ENCODE measurements at regions of chr19 and their contacts with region 1.

Region 1: GRCh38 chr19:34120846-34121639 is 51.3 kb upstream of the LSM14A start:
- DNase-seq: peak; percentile 59
- H3K4me3 ChIP-seq: no peak overlapping the region
- H3K27ac ChIP-seq: no peak overlapping the region
- H3K4me1 ChIP-seq: no peaks in the 10 kb centered on the region
- CTCF ChIP-seq: peak; percentile 89

Region 2: DNA sequence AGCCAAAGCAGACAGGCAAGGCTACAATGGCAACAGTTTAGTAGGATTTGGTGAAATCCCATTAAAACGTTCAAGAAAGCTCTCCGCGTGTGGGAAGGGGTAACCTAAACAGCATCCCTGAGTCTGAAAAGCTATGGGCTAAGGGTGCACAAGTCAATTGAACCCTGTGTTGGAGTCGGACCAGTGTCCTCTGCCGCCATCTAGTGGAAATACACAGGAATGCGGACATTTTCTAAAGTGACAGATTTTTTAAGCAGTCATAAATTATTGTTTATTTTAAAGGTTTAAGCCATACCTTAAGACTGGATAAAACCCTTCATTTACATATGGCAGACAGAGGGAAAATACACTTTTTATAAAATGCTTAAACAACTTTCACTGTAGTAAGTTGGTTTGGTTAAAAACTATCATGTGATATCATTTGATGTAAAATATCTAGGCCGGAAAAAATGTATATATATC is 24.7 kb after region 1 on chr19:
- CTCF ChIA-PET with region 1: interaction called, 3 read pairs
- POLR2A ChIA-PET with region 1: no interaction called
- intact Hi-C with region 1: loop called (anchors 1 kb)
- DNase-seq: peak; percentile 71
- H3K4me3 ChIP-seq: no peak overlapping the region
- H3K27ac ChIP-seq: no peak overlapping the region
- H3K4me1 ChIP-seq: no peaks in the 10 kb centered on the region
- CTCF ChIP-seq: peak; percentile 95

Region 3: DNA sequence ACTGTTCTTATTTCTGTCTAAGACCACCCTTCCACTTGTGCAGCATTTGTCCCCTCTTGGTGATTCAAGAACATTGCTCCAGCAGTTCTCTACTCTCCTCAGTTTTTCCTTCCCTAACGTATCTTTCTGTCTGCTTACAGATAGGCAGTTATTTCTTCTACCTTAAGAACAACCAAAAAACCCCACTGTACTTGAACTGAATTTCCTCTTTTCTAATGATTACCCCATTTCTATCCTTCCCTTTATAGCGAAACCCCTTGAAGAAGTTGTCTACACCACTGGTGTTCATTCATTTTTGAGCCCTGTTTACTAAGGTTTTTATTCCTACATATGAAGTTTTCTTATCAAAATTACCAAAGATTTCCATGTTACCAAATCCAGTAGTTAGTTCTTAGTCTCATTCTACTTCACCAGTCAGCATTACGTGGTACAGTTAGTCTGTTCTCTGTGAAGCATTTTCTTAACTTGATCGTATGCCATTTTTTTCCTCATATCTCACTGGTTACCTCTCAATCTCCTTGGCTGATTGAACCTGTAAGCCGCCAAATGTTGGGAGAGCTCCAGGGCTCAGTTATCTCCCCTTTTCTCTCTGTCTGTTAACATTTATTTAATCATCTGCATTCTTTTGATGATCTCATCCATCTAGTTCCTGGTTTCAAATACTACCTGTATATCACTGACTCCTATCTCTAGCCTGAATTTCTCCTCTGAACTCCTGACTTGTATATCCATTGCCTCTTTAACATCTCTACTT is 60.2 kb after region 1 on chr19:
- CTCF ChIA-PET with region 1: no interaction called
- POLR2A ChIA-PET with region 1: no interaction called
- intact Hi-C with region 1: no loop called
- DNase-seq: no peak
- H3K4me3 ChIP-seq: no peak overlapping the region
- H3K27ac ChIP-seq: no peak overlapping the region
- H3K4me1 ChIP-seq: peaks cover 61% of the 10 kb centered on the region
- CTCF ChIP-seq: no peak

Region 4: DNA sequence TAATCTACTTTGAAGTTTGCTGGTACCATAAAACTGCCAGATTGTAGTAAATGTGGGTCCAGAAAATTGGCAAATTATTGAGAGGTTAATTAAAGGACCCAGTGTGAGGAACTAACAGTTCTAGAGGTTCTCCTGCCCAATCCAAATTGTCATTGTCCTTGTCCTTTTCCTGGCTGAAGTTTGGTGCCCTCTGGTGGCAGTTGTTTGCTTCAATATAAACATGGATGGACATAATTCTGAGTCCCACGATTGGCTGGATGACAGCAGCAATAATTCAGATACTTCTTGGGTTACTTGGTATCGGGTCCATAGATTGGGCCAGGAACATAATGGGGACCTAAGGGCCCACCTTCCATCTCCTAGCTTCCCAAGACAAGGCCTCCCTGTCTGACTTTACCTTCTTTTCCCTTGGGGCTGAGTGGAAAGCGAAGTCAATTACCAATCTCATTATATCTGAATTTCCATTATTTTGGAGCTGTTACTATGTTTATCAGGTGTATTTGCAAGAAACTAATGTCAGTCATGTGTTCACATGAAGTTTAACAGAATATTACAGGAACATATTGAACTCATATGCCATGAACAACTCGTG is 99.5 kb after region 1 on chr19:
- CTCF ChIA-PET with region 1: no interaction called
- POLR2A ChIA-PET with region 1: no interaction called
- intact Hi-C with region 1: loop called (anchors 10 kb)
- DNase-seq: peak; percentile 73
- H3K4me3 ChIP-seq: no peak overlapping the region
- H3K27ac ChIP-seq: no peak overlapping the region
- H3K4me1 ChIP-seq: no peaks in the 10 kb centered on the region
- CTCF ChIP-seq: peak; percentile 97

Region 5: GRCh38 chr19:34276614-34277013 is 155.6 kb after region 1 on chr19:
- CTCF ChIA-PET with region 1: no interaction called
- POLR2A ChIA-PET with region 1: no interaction called
- intact Hi-C with region 1: no loop called
- DNase-seq: peak; percentile 45
- H3K4me3 ChIP-seq: peak overlapping the region; percentile 38
- H3K27ac ChIP-seq: peak overlapping the region; percentile 47
- H3K4me1 ChIP-seq: peaks cover 57% of the 10 kb centered on the region
- CTCF ChIP-seq: no peak

Region 6: GRCh38 chr19:34345947-34346351 is 224.9 kb after region 1 on chr19:
- CTCF ChIA-PET with region 1: no interaction called
- POLR2A ChIA-PET with region 1: no interaction called
- intact Hi-C with region 1: loop called (anchors 10 kb)
- DNase-seq: peak; percentile 82
- H3K4me3 ChIP-seq: no peak overlapping the region
- H3K27ac ChIP-seq: no peak overlapping the region
- H3K4me1 ChIP-seq: no peaks in the 10 kb centered on the region
- CTCF ChIP-seq: peak; percentile 98